HEK293 (cell line): ENCODE measurements at regions of chr3 and their contacts with region 1.

Region 1: GRCh38 chr3:99686955-99687612 is 48.7 kb downstream of the COL8A1 start:
- H3K4me3 ChIP-seq: no peak overlapping the region
- H3K27ac ChIP-seq: no peak overlapping the region
- H3K4me1 ChIP-seq: no peaks in the 10 kb centered on the region
- CTCF ChIP-seq: no peak; the same call in 1 of the 2 replicates

Region 2: DNA sequence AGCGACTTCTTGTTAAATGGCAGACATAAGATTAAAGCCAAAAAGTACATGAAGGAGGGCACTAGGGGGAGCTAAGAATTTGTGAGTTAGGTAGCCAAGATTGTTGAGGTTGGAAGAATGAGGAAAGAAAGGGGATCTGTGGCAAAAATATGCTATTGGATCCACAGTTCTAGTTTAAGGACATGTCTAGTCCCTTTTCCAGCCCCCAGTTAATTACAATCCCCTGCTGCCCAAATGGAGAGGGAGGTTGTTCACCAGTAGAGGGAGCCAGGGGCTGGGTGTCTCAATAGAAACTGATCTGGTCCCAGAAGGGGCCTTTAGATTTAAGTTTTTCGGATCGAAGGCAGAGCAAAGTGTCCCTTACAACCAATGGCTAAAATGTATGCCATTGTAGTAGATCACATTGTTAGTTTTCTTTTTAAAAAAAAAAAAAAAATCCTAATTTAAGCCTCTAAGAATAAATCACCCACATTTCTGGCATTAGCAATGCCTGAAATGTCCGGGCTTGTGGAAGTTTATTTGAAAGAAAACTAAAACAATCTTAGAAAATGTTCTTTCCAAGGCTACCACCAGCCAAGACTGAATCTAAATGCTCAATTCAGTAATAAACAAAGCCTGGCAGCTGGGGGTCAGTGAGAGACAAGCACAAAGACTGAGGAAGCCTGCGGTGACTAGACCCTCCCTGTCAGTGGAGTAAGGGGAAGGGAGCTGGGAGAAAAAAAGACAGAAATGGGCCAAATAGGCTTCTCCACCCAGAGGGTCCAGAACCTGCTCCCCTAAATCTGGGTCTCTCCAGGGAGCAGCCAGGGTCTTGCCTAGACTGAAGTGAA is 41.6 kb before region 1 on chr3:
- CTCF ChIA-PET with region 1: interaction called, 13 read pairs
- POLR2A ChIA-PET with region 1: no interaction called
- H3K4me3 ChIP-seq: no peak overlapping the region
- H3K27ac ChIP-seq: no peak overlapping the region
- H3K4me1 ChIP-seq: no peaks in the 10 kb centered on the region
- CTCF ChIP-seq: peak; percentile 36; the same call in 1 of the 2 replicates